Posterior vena cava (tissue), 2 donors: ENCODE measurements at regions of chr6 and their contacts with region 1.

Region 1: DNA sequence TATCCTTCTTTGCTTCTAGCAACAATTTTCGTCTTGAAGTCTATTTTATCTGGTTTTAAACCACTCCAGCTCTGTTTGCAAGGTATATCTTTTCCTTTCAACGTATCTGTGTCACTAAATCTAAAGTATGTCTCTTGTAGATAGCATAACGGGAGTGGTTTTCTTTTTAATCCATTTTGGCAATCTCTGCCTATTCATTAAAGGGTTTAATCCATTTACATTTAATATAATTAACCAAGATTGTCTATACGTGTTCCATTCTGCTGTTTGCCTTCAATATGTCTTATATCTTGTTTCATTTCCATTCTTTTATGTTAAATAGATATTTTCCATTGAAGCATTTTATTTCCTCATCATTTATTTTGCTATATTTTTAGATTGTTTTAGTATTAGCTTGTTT is 587.9 kb downstream of the C6orf118 start:
- DNase-seq: no peak

Region 2: DNA sequence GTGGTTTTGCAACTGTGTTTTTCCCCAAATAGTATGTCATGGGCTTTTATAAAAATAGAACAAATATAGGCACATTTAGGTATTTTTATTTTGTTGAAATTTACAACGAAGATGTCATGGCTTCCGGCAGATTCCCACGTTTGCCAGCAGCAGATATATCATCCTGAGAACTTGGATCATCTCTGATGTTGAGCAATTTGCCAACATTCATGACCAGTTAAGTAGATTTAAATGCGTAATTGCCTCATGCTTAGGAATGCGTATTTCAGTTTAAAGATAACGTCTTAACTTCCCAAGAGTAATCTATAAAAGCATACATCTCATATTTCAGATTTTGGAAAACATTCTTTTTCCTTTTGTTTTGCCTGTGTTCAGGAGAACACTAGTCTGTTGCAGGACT is 849.1 kb before region 1 on chr6:
- intact Hi-C with region 1: no loop called
- DNase-seq: no peak

Region 3: DNA sequence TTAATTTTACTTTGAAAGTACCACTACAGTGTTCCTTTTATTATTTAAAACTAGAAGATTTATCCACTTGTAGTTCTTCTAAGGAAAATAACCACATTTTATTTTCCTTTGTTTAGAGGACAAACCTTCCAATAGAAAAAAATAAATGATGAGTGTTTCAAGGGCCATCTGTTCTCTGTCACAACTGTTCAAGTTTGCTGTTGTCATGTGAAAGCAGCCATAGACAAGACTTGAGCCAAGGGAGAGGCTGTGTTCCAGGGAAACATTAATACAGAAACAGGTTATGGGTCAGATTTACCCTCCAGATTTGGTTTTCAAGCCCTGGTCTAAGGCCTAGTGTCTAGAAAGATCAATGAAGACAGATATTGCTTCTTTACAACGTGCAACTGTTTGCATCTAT is 124.3 kb after region 1 on chr6:
- intact Hi-C with region 1: loop called in 1 of 2 experiments (anchors 10 kb)
- DNase-seq: no peak